ENCODE measurements at regions of chr2 and their contacts with region 1.

Region 1: DNA sequence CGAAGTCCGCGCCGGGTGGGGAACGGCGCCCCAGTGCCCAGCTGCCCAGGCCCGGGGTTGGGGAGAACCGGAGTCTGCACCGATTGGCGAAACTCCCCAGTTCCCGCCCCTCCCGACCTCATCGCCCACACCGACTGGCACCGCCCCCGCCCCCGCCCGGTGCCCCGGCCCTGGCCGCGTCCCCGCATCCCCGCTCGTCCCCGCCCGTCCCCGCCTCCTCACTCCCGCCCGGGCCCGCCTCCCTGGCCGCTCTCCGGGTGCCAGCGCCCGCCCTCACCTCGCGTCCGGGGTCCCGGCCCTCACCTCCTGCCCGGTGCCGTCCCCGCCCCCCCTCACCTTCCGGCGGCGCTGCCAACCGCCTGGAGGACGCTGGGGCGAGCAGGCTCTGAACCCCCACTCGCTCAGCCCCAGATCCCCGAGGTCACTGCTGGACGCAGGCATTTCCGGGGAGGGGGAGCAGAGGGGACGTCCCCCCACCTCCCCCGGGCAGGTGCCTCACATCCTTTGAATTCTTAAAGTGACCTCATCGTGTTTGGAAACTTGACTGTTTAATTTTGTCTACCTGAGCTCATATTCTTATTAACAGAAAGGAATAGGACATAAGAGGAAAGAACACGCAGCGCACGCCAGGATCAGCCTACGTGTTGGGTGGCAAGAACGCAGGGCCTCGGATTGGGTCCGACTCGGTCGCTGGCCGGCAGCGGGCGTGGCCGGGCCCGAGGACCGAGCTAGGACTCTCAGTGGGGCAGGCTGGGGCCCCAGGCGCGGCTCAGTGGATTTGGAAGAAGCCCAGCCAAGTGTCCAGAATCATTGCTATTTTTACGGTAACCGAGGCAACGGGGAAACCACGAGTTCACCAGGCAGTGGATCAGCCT is at the start of gene FAM110C:
- DNase-seq: peak; percentile 69
- H3K4me3 Mint-ChIP-seq: peak within 1 kb of the TSS; percentile 72
- H3K27ac Mint-ChIP-seq: peak within 1 kb of the TSS; percentile 8
- H3K4me1 Mint-ChIP-seq: peaks cover 23% of the 10 kb centered on the region
- H3K27me3 Mint-ChIP-seq: peaks cover 32% of the 10 kb centered on the region
- total RNA-seq, gene FAM110C: 3.1 to 3.6 TPM

Region 2: DNA sequence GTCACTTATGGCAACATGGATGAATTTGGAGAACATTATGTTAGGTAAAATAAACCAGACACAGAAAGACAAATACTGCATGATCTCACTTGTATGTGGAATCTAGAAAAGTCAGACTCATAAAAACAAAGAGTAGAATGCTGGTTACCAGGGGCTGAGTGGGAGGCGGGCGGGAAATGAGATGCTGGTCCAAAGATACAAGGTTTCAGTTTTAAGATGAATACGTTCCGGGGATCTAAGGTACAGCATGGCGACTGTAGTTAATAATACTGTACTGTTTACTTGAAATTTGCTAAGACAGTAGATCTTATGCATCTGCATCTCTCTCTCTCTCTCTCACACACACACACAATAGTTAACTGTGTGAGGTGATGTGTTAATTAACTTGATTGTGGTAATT is 14.6 kb before region 1 on chr2:
- CTCF ChIA-PET with region 1: interaction called, 3 read pairs
- POLR2A ChIA-PET with region 1: no interaction called
- intact Hi-C with region 1: loop called (anchors 1 kb)
- DNase-seq: peak; percentile 85
- H3K4me3 Mint-ChIP-seq: no peak overlapping the region
- H3K27ac Mint-ChIP-seq: peak overlapping the region; percentile 64
- H3K4me1 Mint-ChIP-seq: peaks cover 52% of the 10 kb centered on the region
- H3K27me3 Mint-ChIP-seq: no peaks in the 10 kb centered on the region

Region 3: GRCh38 chr2:69366-70344 is 22.9 kb after region 1 on chr2:
- CTCF ChIA-PET with region 1: no interaction called
- POLR2A ChIA-PET with region 1: no interaction called
- intact Hi-C with region 1: no loop called
- DNase-seq: no peak
- H3K4me3 Mint-ChIP-seq: no peak overlapping the region
- H3K27ac Mint-ChIP-seq: no peak overlapping the region
- H3K4me1 Mint-ChIP-seq: no peaks in the 10 kb centered on the region
- H3K27me3 Mint-ChIP-seq: peaks cover 3% of the 10 kb centered on the region

Region 4: DNA sequence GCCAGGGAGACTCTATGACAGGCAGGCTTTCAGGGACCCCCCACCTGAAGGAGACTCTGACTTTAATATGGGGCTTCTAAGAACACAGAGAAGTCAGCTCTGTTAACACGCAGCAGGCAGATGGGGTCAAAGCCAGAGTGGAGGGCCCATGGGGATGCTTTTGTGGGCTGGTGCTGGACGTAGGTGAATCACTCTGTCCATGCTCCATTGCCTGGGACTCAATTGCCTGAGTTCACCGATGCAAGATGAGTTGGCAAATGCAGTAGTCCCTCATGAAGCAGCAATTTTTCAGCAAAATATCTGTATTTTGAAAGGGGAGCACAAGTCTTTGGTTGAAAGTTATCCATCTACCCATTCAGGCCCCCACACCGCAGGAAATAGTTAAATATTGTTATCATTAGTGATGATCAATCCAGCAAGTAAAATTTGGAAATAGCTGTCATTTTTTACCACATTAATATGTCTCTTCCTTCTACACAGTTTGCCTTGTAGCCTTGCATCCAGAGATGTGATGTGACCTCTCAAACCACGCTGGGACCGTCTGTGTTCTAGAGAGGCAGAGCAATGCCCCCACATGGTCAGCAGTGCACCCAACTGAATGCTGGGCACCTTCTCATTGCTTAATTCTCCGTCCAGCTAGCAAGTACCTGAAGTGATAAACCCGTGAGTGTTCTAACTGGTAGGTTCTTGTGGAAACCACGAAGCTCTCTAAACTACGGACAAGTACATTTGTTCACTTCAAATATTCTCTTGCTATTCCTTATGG is 34.4 kb after region 1 on chr2:
- CTCF ChIA-PET with region 1: no interaction called
- POLR2A ChIA-PET with region 1: no interaction called
- intact Hi-C with region 1: no loop called
- DNase-seq: no peak
- H3K4me3 Mint-ChIP-seq: no peak overlapping the region
- H3K27ac Mint-ChIP-seq: no peak overlapping the region
- H3K4me1 Mint-ChIP-seq: no peaks in the 10 kb centered on the region
- H3K27me3 Mint-ChIP-seq: peaks cover 21% of the 10 kb centered on the region